Activated naive CD8-positive, alpha-beta T cell treated with anti-CD3 and anti-CD28 coated beads, Interleukin-2, amount 10 ng/mL, durations not matched to agents 7 days and 5 days (primary cell): ENCODE measurements at regions of chr1 and their contacts with region 1.

Region 1: DNA sequence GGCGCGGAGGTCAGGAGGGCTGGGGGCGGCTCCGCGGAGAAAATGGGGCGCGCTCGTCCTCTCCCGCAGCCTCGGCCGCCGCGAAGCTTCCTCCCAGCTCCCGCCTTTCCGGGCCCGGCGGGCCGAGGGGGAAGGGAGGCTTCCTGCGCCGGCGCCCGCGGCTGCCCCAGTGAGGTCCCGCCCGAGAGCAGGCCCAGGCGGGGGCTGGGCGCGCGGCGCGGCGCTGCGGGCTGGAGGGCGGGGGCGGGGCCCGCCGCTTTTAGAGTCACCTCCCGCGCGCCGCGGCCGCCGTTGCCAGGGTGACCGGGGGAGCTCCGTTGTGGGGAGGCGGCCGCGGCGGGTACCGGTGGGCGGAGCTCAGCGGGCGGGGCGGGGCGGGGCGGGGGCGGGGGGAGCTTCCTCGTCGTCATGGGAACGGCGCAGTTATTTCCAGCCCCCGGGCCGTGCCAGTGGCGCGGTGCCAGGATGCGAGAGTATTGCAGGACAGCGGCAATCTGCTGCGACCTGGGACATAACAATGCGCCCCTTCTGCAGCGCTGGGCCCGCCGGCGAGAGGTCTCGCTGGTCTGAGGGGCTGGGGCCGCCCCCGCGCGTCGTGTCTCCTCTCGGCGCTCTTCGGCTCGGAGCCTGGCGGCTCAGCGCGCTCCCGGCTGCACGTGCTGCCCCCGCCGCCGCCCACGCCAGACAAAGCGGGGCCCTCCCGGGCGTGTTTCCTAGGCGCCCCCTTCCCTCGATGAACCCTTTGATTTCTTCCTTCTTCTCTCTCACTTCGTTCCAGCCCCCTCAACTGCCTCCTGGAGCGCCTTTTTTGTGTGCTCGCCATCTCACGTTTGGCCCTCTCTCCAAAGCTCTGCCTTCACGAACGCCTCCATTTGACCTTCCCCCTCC is 16.9 kb downstream of the IER5 start:
- DNase-seq: peak; percentile 95
- ATAC-seq: peak; percentile 84
- H3K4me3 Mint-ChIP-seq: peak overlapping the region; percentile 85
- H3K27ac Mint-ChIP-seq: peak overlapping the region; percentile 49
- H3K4me1 Mint-ChIP-seq: peaks cover 58% of the 10 kb centered on the region
- H3K27me3 Mint-ChIP-seq: peaks cover 34% of the 10 kb centered on the region

Region 2: GRCh38 chr1:181062836-181063428 is 42.4 kb before region 1 on chr1:
- POLR2A ChIA-PET with region 1: interaction called, 10 read pairs
- DNase-seq: peak; percentile 44
- ATAC-seq: peak; percentile 95
- H3K4me3 Mint-ChIP-seq: peak overlapping the region; percentile 63
- H3K27ac Mint-ChIP-seq: peak overlapping the region; percentile 83
- H3K4me1 Mint-ChIP-seq: peaks cover 17% of the 10 kb centered on the region
- H3K27me3 Mint-ChIP-seq: no peaks in the 10 kb centered on the region

Region 3: DNA sequence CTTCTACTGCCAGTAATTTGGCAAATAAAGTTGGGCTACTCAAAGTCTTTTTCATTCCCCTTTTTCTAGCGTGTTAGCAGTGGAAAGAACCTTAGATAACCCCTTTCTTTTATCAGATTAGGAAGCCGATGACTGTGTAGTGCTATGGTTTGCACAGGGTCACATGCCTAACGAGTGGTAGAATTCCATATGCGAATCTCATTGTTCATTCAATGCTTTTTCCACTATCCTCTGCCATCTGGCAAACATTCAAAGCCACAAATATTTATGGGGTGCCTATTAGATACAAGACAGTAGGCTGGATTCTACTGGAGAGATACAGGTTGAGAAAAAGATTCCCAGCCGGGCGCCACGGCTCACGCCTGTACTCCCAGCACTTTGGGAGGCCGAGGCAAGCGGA is 31.7 kb before region 1 on chr1:
- POLR2A ChIA-PET with region 1: no interaction called
- DNase-seq: no peak
- ATAC-seq: no peak
- H3K4me3 Mint-ChIP-seq: no peak overlapping the region
- H3K27ac Mint-ChIP-seq: no peak overlapping the region
- H3K4me1 Mint-ChIP-seq: no peaks in the 10 kb centered on the region
- H3K27me3 Mint-ChIP-seq: peaks cover 40% of the 10 kb centered on the region

Region 4: GRCh38 chr1:181088079-181089016 is 17.0 kb before region 1 on chr1 and contains the start of gene IER5:
- POLR2A ChIA-PET with region 1: interaction called, 244 read pairs
- DNase-seq: peak; percentile 97
- ATAC-seq: peak; percentile 79
- H3K4me3 Mint-ChIP-seq: peak within 1 kb of the TSS; percentile 98
- H3K27ac Mint-ChIP-seq: peak within 1 kb of the TSS; percentile 99
- H3K4me1 Mint-ChIP-seq: peaks cover 47% of the 10 kb centered on the region
- H3K27me3 Mint-ChIP-seq: no peaks in the 10 kb centered on the region
- total RNA-seq, gene IER5: 36.6 to 36.8 TPM

Region 5: GRCh38 chr1:181128592-181129497 is 23.5 kb after region 1 on chr1:
- POLR2A ChIA-PET with region 1: interaction called, 17 read pairs
- DNase-seq: no peak
- ATAC-seq: no peak
- H3K4me3 Mint-ChIP-seq: peak overlapping the region; percentile 50
- H3K27ac Mint-ChIP-seq: peak overlapping the region; percentile 44
- H3K4me1 Mint-ChIP-seq: peaks cover 45% of the 10 kb centered on the region
- H3K27me3 Mint-ChIP-seq: peaks cover 6% of the 10 kb centered on the region

Region 6: DNA sequence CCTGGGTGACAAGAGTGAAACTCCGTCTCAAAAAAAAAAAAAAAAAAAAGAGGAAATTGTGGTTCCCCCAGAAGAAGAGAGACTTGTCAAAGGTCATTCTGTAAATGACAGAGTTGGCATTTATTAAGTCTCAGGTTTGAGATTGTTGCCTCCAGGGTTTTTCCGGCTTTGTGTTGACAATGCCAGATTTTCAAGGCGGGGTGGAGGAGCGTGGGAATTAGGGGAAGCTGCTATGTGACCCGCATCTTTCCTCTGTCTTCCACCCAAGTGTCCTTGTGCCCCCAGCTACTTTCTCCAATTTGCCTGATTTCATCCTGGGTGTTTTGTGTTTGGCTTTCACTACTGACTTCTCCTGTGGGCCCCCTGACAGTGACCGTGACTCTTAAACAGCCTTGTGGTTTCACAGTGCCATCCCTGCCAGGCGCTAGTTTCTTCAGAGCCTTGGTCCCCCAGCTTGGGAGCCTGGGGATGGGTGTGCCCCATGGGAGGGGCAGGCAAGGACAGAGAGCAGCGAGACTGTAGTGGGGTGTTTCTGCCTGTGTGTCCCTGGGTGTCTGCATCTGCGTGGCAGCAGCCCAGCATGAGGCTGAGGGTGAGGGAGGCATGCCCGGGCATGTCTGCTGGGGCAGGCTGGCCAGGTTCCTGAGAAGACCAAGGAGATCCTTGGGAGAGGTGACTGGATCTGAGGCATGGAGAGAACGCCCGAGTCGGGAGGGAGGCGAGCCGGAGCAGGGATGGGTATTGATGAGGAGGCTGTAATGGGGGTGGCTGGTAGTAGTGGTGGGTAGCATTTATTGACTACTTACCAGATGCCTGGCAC is 29.4 kb after region 1 on chr1:
- POLR2A ChIA-PET with region 1: interaction called, 31 read pairs
- DNase-seq: peak; percentile 50
- ATAC-seq: peak; percentile 48
- H3K4me3 Mint-ChIP-seq: peak overlapping the region; percentile 58
- H3K27ac Mint-ChIP-seq: peak overlapping the region; percentile 86
- H3K4me1 Mint-ChIP-seq: peaks cover 67% of the 10 kb centered on the region
- H3K27me3 Mint-ChIP-seq: peaks cover 3% of the 10 kb centered on the region

Region 7: GRCh38 chr1:181142096-181142958 is 36.9 kb after region 1 on chr1:
- POLR2A ChIA-PET with region 1: interaction called, 31 read pairs
- DNase-seq: peak; percentile 94
- ATAC-seq: peak; percentile 88
- H3K4me3 Mint-ChIP-seq: peak overlapping the region; percentile 67
- H3K27ac Mint-ChIP-seq: peak overlapping the region; percentile 76
- H3K4me1 Mint-ChIP-seq: peaks cover 54% of the 10 kb centered on the region
- H3K27me3 Mint-ChIP-seq: peaks cover 19% of the 10 kb centered on the region

Region 8: DNA sequence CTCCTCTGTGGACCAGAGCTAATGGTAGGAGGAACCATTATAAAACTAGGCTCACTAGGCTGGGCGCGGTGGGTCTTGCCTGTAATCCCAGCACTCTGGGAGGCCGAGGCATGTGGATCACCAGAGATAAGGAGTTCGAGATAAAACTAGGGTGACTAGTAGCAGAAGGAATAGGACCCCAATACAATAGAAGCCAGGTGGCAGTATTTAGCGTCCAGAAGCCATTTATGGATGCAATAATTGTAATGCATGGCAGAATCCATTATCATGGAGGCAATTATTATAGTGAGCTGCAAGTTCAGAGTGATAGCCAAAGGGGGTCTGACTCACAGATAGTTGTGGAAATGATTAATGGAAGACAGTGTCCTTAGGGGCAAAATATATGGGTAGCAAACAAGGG is 127.2 kb after region 1 on chr1:
- POLR2A ChIA-PET with region 1: no interaction called
- DNase-seq: no peak
- ATAC-seq: no peak
- H3K4me3 Mint-ChIP-seq: no peak overlapping the region
- H3K27ac Mint-ChIP-seq: no peak overlapping the region
- H3K4me1 Mint-ChIP-seq: no peaks in the 10 kb centered on the region
- H3K27me3 Mint-ChIP-seq: peaks cover 4% of the 10 kb centered on the region